MCF 10A (cell line): ENCODE measurements at regions of chr11 and their contacts with region 1.

Region 1: DNA sequence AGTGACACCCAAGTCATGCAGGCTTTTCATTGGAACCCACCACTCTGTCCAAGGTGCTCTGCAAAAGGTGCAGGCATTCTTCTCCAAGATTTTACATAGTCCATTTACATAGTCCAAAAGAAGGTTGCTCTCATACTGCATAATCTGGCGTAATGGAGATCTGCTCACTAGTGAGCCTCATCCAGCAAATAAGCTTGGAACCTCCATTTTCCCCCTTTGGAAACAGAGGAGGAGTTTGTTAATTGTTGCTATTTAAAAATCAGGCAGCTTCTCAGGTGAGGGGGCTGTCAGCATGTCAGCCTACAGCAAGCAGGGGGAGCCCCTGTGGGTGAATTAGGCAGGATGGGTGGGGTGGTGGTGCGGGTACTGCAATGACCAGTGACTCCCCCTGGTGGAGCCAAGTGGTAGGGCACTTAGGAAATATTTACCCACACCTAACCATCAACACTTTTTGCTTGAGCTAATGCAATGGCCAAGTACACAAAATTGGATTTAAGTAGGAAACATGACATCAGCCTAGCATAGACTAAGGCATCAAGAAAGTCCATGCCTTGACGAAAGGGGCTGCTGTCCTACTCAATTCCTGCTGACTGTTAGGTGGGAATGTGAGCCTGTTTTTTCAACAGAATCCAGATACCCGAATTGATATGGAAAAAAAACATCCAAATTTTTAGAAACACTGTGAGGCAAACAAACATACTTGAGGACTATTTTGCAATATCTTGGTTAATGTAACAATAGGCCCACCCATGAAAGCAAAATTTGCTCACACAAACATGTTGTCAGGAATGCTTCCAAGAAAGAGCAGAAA is 64.5 kb downstream of the AMBRA1 start:
- DNase-seq: peak; percentile 56
- H3K4me3 Mint-ChIP-seq: no peak overlapping the region
- H3K27ac Mint-ChIP-seq: no peak overlapping the region
- H3K4me1 Mint-ChIP-seq: peaks cover 6% of the 10 kb centered on the region
- H3K27me3 Mint-ChIP-seq: no peaks in the 10 kb centered on the region
- CTCF ChIP-seq: peak; percentile 88

Region 2: GRCh38 chr11:46389450-46390253 is 139.6 kb before region 1 on chr11:
- CTCF ChIA-PET with region 1: interaction called, 19 read pairs
- POLR2A ChIA-PET with region 1: no interaction called
- intact Hi-C with region 1: loop called (anchors 2 kb)
- DNase-seq: peak; percentile 70
- H3K4me3 Mint-ChIP-seq: peak overlapping the region; percentile 69
- H3K27ac Mint-ChIP-seq: no peak overlapping the region
- H3K4me1 Mint-ChIP-seq: peaks cover 11% of the 10 kb centered on the region
- H3K27me3 Mint-ChIP-seq: peaks cover 40% of the 10 kb centered on the region
- CTCF ChIP-seq: peak; percentile 88

Region 3: DNA sequence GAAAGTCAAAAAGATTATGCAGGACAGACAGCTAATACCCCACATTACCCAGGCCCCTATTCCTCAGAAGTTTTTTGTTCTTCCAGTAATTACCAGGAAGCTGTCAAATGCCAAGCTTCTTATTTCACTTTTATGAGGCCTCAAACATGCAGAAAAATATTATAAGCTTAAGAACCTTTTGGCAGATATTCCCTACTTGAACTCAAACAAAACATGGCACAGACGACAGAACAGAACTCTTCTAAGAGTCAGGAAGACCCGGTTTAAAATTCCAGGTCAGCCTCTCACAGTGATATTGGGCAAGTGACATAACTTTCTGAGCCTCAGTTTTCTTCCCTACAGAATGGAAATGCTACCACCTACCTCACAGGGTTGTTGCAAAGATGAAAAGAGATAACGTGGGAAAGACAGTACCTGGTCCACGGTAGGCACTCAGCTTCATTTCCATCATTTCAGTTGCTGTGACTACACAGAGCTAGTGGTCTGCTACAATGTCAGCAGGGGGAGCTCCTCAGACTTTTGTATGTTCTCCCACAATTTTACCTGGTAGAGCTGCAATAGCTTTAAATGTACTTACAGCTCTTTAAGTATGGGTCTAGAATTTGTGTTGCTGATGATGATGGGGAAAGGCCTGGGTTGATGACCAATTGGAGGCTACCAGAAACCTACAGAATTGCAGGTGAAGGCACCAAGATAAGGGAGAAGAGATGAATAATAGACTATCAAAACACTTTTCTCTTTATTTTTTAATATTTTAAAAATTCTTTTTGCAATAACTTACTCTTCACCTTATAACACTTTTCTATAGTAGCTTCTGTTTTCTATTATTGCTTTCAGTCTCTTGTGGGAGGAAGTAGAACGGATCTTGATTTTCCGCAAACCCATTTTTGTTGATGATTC is 39.4 kb before region 1 on chr11:
- CTCF ChIA-PET with region 1: interaction called, 13 read pairs
- POLR2A ChIA-PET with region 1: no interaction called
- intact Hi-C with region 1: no loop called
- DNase-seq: peak; percentile 60
- H3K4me3 Mint-ChIP-seq: no peak overlapping the region
- H3K27ac Mint-ChIP-seq: no peak overlapping the region
- H3K4me1 Mint-ChIP-seq: peaks cover 9% of the 10 kb centered on the region
- H3K27me3 Mint-ChIP-seq: no peaks in the 10 kb centered on the region
- CTCF ChIP-seq: peak; percentile 44

Region 4: GRCh38 chr11:46513934-46514342 is 15.4 kb before region 1 on chr11:
- CTCF ChIA-PET with region 1: interaction called, 14 read pairs
- POLR2A ChIA-PET with region 1: no interaction called
- intact Hi-C with region 1: no loop called
- DNase-seq: peak; percentile 80
- H3K4me3 Mint-ChIP-seq: no peak overlapping the region
- H3K27ac Mint-ChIP-seq: no peak overlapping the region
- H3K4me1 Mint-ChIP-seq: peaks cover 6% of the 10 kb centered on the region
- H3K27me3 Mint-ChIP-seq: no peaks in the 10 kb centered on the region
- CTCF ChIP-seq: no peak

Region 5: GRCh38 chr11:46574656-46575055 is 45.4 kb after region 1 on chr11:
- CTCF ChIA-PET with region 1: no interaction called
- POLR2A ChIA-PET with region 1: no interaction called
- intact Hi-C with region 1: no loop called
- DNase-seq: no peak
- H3K4me3 Mint-ChIP-seq: no peak overlapping the region
- H3K27ac Mint-ChIP-seq: no peak overlapping the region
- H3K4me1 Mint-ChIP-seq: no peaks in the 10 kb centered on the region
- H3K27me3 Mint-ChIP-seq: no peaks in the 10 kb centered on the region
- CTCF ChIP-seq: no peak